ENCODE measurements at regions of chr17 and their contacts with region 1.

Region 1: DNA sequence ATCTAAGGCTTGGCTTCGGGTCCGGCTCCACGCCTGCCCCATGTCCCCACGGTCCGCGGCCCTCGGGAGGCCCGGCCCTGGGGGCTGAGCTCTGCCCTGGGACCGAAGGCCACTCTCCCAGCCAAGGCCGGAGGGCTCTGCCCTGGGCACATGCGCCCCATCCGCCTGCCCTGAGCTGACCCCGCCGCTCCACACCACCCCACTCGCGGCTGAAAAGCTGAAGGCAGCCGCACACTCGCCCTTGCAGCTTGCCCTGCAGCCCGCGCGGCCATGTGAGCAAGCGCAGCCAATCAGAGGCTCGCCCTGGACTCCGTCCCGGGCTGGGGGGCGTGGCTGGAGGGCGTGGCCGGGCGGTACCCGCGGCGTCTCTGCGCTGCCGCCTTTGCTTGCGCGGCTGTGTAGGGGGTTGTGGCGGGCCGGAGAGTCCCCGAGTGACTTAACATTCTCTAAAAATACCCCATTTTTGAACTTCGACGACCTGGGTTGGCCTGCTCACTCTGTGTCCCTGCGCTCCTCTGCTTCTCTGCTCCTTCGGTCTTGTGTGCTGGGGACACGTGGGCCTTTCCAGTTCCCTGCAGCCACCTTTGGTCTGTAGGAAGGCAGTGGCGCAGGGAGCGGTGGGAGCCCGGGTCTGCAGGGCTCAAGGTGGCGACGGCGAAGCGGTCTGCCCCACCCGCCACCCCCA is 8.8 kb upstream of the MAP2K3 start:
- DNase-seq: peak; percentile 62 to 91
- H3K4me3 ChIP-seq: peak overlapping the region; percentile 70
- H3K27ac ChIP-seq: no peak overlapping the region
- H3K4me1 ChIP-seq: peaks cover 4% of the 10 kb centered on the region; the same call in 1 of the 2 replicates
- H3K27me3 ChIP-seq: no peaks in the 10 kb centered on the region
- CTCF ChIP-seq: no peak

Region 2: GRCh38 chr17:21318439-21318838 is 42.7 kb after region 1 on chr17:
- CTCF ChIA-PET with region 1: no interaction called
- POLR2A ChIA-PET with region 1: no interaction called
- intact Hi-C with region 1: loop called (anchors 2 kb)
- DNase-seq: no peak
- H3K4me3 ChIP-seq: no peak overlapping the region
- H3K27ac ChIP-seq: no peak overlapping the region
- H3K4me1 ChIP-seq: no peaks in the 10 kb centered on the region
- H3K27me3 ChIP-seq: no peaks in the 10 kb centered on the region
- CTCF ChIP-seq: no peak

Region 3: GRCh38 chr17:21511363-21512198 is 235.9 kb after region 1 on chr17:
- CTCF ChIA-PET with region 1: interaction called, 10 read pairs
- POLR2A ChIA-PET with region 1: no interaction called
- intact Hi-C with region 1: loop called (anchors 1 kb)
- DNase-seq: peak; percentile 38 to 67
- H3K4me3 ChIP-seq: no peak overlapping the region
- H3K27ac ChIP-seq: no peak overlapping the region
- H3K4me1 ChIP-seq: 0 out of 2 replicates have a peak, but pooled peaks cover 3% of the 10 kb centered on the region
- H3K27me3 ChIP-seq: peaks cover 25% of the 10 kb centered on the region
- CTCF ChIP-seq: peak; percentile 75